HepG2 (cell line): ENCODE measurements at regions of chr1 and their contacts with region 1.

Region 1: GRCh38 chr1:244835276-244836134 is at the start of gene COX20:
- DNase-seq: peak; percentile 88
- ATAC-seq: peak; percentile 75
- H3K4me3 ChIP-seq: peak within 1 kb of the TSS; percentile 73 to 98 (median 89)
- H3K27ac ChIP-seq: peak within 1 kb of the TSS; percentile 100
- H3K4me1 ChIP-seq: peaks cover 71% of the 10 kb centered on the region
- H3K27me3 ChIP-seq: no peaks in the 10 kb centered on the region; a peak in 1 of 5 replicates
- CTCF ChIP-seq: peak; percentile 15; the same call in 1 of the 2 replicates
- EP300 ChIP-seq: no peak; a peak in 1 of 4 replicates
- POLR2A ChIP-seq: peak; percentile 73 to 75; a peak in 3 of 4 replicates
- RAD21 ChIP-seq: peak; percentile 48
- total RNA-seq, gene COX20: 95.8 and 110 TPM in 2 replicates

Region 2: DNA sequence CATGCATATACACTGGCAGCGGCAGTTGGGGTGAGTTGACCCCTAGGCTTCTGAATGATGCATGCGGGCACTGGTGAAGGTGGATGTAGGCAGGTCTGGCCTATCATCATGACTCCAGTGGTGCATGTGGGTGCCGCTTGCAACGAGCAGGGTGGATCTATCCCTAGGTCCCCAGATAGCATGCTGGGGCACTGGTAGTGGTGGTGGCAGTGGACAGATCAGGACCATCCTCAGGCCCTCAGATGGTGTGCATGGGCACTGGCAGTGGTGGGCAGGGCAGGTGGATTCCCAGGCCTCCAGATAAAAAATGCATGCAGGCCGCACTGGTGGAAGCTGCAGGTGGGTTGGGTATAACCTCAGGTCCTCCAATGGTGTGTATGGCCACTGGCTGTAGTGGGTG is 322.0 kb before region 1 on chr1:
- CTCF ChIA-PET with region 1: no interaction called
- POLR2A ChIA-PET with region 1: no interaction called
- in situ Hi-C with region 1: no loop called
- intact Hi-C with region 1: no loop called
- DNase-seq: no peak
- ATAC-seq: no peak
- H3K4me3 ChIP-seq: no peak overlapping the region
- H3K27ac ChIP-seq: no peak overlapping the region
- H3K4me1 ChIP-seq: no peaks in the 10 kb centered on the region
- H3K27me3 ChIP-seq: no peaks in the 10 kb centered on the region
- CTCF ChIP-seq: no peak
- EP300 ChIP-seq: no peak
- POLR2A ChIP-seq: no peak
- RAD21 ChIP-seq: no peak

Region 3: DNA sequence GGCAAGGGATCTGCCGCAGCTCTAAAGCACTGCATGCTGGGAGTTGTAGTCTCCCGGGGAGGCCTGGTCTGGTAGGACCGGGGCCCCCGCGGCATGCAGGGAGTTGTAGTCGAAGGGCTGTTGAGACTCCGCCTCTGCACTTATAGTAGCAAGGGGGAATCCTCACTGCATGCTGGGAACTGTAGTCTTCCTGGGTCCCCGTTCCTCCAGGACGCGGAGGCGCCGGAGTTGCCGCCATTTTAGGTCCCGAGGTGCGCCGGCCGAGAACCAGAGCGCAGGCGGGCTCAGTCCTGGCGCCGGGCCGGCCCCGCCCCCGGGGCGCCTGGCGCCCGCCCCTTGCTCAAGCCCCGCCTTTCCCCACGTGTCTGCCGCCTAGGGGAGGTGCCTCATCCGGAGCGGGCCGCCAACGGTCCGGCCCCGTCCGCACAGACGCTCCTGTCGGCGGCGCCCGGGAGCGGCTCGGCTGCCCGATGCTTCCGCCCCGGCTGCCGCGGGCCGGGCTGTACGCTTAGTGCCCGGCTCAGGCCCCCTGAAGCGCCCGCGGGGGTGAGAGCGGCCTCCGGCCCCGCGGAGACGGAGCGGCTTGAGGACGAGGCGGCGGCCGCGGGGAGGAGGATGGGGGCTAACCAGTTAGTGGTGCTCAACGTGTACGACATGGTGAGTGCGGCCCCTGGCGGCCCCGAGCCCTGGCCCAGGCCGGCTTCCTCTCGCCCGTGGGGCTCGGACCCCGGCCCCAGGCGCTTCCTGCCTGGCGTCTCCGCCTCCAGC is 182.6 kb before region 1 on chr1 and contains the start of gene DESI2:
- CTCF ChIA-PET with region 1: no interaction called
- POLR2A ChIA-PET with region 1: no interaction called
- in situ Hi-C with region 1: no loop called
- intact Hi-C with region 1: loop called (anchors 5 kb)
- DNase-seq: peak; percentile 99
- ATAC-seq: peak; percentile 97
- H3K4me3 ChIP-seq: peak within 1 kb of the TSS; percentile 69 to 94 (median 94)
- H3K27ac ChIP-seq: peak within 1 kb of the TSS; percentile 83
- H3K4me1 ChIP-seq: peaks cover 27% of the 10 kb centered on the region
- H3K27me3 ChIP-seq: no peaks in the 10 kb centered on the region; a peak in 1 of 5 replicates
- CTCF ChIP-seq: peak; percentile 71
- EP300 ChIP-seq: peak in 1 of 2 experiments; percentile 42; a peak in 2 of 4 replicates
- POLR2A ChIP-seq: peak; percentile 87 to 88
- RAD21 ChIP-seq: peak; percentile 67
- total RNA-seq, gene DESI2: 42.2 and 62.0 TPM in 2 replicates

Region 4: GRCh38 chr1:244817415-244817894 is 18.1 kb before region 1 on chr1:
- CTCF ChIA-PET with region 1: no interaction called
- POLR2A ChIA-PET with region 1: interaction called, 17 read pairs
- in situ Hi-C with region 1: no loop called
- intact Hi-C with region 1: loop called (anchors 1 kb)
- DNase-seq: peak; percentile 90
- ATAC-seq: peak; percentile 87
- H3K4me3 ChIP-seq: no peak overlapping the region
- H3K27ac ChIP-seq: peak overlapping the region; percentile 83
- H3K4me1 ChIP-seq: peaks cover 23% of the 10 kb centered on the region
- H3K27me3 ChIP-seq: no peaks in the 10 kb centered on the region
- CTCF ChIP-seq: no peak
- EP300 ChIP-seq: peak in 1 of 2 experiments; percentile 29; a peak in 1 of 4 replicates
- POLR2A ChIP-seq: no peak
- RAD21 ChIP-seq: peak; percentile 16; the same call in 1 of the 2 replicates

Region 5: DNA sequence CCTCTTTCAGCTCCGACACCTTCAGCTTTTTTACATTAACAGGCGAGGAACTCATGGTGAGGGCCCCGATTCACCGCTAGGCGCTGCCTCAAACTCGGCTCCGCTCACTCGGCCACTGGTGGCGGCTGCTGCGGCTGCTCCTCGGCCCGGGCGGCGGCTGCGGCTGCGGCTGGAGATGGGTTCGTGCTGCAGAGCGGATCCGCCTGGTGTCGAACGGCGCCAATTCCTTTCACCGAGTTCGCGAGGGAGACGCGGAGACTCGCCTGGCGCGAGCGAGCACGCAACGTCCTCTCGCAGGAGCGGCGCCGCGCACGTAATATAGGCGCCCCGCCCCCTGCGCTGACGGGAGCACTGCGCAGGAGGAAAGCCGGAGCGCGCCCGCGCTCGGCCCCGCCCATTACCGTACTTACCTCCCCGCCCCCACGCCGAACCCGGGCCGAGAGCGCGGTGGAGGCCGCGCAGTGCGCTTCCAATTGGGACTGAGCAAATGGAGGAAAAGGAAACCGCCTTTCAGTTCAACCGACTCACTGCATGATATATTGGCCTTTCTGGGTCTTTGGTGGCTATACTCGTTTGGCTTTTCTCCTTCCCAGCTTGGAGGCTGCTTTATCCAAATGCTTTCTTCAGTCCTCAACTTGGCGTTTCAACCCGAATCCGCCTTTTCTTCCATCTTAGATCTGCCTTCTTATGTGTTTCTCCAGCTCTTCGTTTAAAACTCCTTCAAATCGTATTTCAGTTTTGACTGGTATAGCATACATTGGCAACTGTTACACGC is 28.9 kb after region 1 on chr1 and contains the start of gene HNRNPU:
- CTCF ChIA-PET with region 1: no interaction called
- POLR2A ChIA-PET with region 1: interaction called, 163 read pairs
- in situ Hi-C with region 1: no loop called
- intact Hi-C with region 1: loop called (anchors 1 kb)
- DNase-seq: peak; percentile 89
- ATAC-seq: peak; percentile 78
- H3K4me3 ChIP-seq: peak within 1 kb of the TSS; percentile 97 to 100 (median 99)
- H3K27ac ChIP-seq: peak within 1 kb of the TSS; percentile 100
- H3K4me1 ChIP-seq: peaks cover 54% of the 10 kb centered on the region
- H3K27me3 ChIP-seq: no peaks in the 10 kb centered on the region; a peak in 1 of 5 replicates
- CTCF ChIP-seq: peak; percentile 39; the same call in 1 of the 2 replicates
- EP300 ChIP-seq: peak in 1 of 2 experiments; percentile 28; a peak in 1 of 4 replicates
- POLR2A ChIP-seq: peak; percentile 91 to 97
- RAD21 ChIP-seq: peak; percentile 50
- total RNA-seq, gene HNRNPU: 508 and 657 TPM in 2 replicates

Region 6: GRCh38 chr1:245045087-245045881 is 209.8 kb after region 1 on chr1:
- CTCF ChIA-PET with region 1: no interaction called
- POLR2A ChIA-PET with region 1: interaction called, 21 read pairs
- in situ Hi-C with region 1: no loop called
- intact Hi-C with region 1: loop called (anchors 1 kb)
- DNase-seq: peak; percentile 98
- ATAC-seq: peak; percentile 98
- H3K4me3 ChIP-seq: peak overlapping the region; percentile 47 to 68 (median 56)
- H3K27ac ChIP-seq: peak overlapping the region; percentile 94
- H3K4me1 ChIP-seq: peaks cover 48% of the 10 kb centered on the region
- H3K27me3 ChIP-seq: no peaks in the 10 kb centered on the region
- CTCF ChIP-seq: 0 out of 2 replicates have a peak, but pooled peaks have one; percentile 7
- EP300 ChIP-seq: no peak; a peak in 1 of 4 replicates
- POLR2A ChIP-seq: peak; percentile 58 to 69
- RAD21 ChIP-seq: 0 out of 2 replicates have a peak, but pooled peaks have one; percentile 20

Region 7: GRCh38 chr1:245715970-245716369 is 880.5 kb after region 1 on chr1:
- CTCF ChIA-PET with region 1: no interaction called
- POLR2A ChIA-PET with region 1: no interaction called
- in situ Hi-C with region 1: no loop called
- intact Hi-C with region 1: no loop called
- DNase-seq: peak; percentile 43
- ATAC-seq: peak; percentile 35
- H3K4me3 ChIP-seq: no peak overlapping the region
- H3K27ac ChIP-seq: no peak overlapping the region
- H3K4me1 ChIP-seq: no peaks in the 10 kb centered on the region; the same call in 1 of the 2 replicates
- H3K27me3 ChIP-seq: no peaks in the 10 kb centered on the region
- CTCF ChIP-seq: no peak
- EP300 ChIP-seq: no peak
- POLR2A ChIP-seq: no peak
- RAD21 ChIP-seq: no peak